ENCODE measurements at regions of chr11 and their contacts with region 1.

Region 1: DNA sequence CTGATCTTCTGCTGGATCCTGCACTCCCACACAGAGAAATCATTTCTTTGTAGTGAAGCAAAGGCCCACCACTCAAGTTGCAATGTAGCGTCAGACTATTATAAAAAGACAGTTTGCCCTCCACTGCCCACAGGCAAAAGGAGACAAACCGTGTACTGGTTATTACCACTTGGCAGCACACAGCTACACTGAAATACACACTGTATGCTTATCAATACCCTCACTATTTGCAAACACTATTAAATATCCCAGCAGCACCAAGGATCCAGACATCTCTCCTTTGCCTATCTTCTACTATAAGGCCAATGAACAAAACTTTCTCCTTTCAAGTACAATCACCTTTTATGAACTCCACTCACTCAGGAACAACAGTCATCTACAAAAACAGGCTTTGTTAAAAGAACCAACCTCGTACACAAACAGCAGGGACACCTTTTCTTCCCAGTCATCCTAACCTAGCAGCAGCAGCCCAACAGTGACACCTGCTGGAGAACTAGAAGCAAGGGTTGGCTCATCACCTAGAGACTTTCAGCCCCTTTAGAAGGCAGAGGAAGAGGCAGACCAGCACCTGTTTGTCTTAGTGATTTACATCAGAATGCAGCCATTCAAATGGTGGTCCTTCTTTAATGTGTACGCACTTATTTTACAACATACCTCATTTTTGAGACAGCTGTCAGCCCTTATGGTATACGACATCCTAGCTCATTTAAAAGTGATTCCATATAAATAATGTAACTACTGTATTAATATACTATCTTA is 56.1 kb downstream of the AMBRA1 start:
- DNase-seq: no peak
- H3K4me3 ChIP-seq: no peak overlapping the region
- CTCF ChIP-seq: peak; percentile 91

Region 2: GRCh38 chr11:46367244-46367915 is 170.3 kb before region 1 on chr11:
- CTCF ChIA-PET with region 1: interaction called, 12 read pairs
- POLR2A ChIA-PET with region 1: no interaction called
- DNase-seq: no peak
- H3K4me3 ChIP-seq: no peak overlapping the region
- CTCF ChIP-seq: peak; percentile 89

Region 3: DNA sequence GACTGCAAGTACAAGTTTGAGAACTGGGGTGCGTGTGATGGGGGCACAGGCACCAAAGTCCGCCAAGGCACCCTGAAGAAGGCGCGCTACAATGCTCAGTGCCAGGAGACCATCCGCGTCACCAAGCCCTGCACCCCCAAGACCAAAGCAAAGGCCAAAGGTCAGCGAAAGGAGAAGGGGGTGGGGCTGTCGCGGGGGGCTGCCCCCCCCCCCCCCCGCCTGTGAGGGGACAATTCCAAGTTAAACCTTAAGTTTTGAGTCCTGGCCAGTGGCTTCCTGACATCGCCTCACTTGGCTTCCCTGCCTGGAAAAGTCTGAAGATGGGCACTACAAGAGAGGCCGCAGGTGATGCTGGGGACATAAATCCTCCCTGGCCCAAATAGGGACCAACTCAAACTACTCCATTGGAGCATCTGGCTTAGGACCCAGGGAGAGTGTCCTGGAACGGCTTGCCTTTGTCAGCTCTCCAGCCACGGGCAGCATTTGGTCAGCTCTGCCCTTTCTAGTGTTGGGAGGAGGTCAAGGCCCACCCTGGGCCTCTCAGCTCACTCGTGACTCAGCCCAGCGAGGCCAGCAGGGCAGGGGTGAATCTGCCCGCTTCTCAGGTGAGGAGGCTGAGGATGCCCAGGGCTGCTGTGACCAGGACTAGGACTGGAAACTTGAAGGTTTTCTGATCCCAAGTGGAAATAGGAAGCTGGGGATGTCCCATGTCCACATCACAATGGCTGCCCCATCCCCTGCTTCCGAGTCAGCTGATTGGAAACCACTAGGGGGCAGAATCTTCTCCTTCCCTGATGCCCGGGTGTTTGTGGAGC is 154.9 kb before region 1 on chr11:
- CTCF ChIA-PET with region 1: interaction called, 103 read pairs
- POLR2A ChIA-PET with region 1: no interaction called
- DNase-seq: no peak
- H3K4me3 ChIP-seq: peak overlapping the region; percentile 64
- CTCF ChIP-seq: peak; percentile 65

Region 4: GRCh38 chr11:46489661-46490560 is 47.8 kb before region 1 on chr11:
- CTCF ChIA-PET with region 1: interaction called, 11 read pairs
- POLR2A ChIA-PET with region 1: no interaction called
- DNase-seq: no peak
- H3K4me3 ChIP-seq: no peak overlapping the region
- CTCF ChIP-seq: peak; percentile 58

Region 5: DNA sequence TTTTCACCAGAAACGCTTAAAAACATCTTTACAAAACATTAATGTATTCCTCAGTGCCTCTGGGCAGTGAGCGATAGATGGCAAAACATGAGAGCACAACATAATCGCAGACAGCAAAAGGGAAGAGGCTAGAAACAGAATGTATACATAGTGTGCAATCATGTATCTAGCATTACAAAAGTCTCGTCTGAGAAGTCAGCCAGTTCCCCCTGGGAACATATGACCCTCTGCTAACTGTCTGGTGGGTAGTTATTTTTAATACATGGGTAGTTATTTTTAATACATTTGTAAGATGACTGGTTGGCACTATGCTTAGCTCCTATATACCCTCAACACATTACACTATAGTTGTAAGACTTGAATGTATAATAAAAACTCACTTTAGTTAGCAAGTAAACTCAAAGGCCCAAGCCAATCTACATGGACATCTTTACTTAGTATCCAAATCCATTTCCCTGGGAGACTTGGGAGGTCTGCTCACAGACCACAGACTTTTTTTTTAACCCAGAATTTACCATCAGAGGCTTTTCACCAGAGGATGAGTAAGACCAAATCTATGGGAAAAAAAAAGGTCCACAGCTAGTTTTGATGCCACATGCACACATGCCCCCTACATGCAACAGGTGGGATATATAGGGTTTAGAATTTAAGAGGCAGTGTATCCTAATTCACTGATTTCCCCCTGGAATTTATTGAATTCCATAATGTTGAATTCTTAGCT is 15.6 kb before region 1 on chr11:
- CTCF ChIA-PET with region 1: interaction called, 124 read pairs
- POLR2A ChIA-PET with region 1: no interaction called
- DNase-seq: peak; percentile 16
- H3K4me3 ChIP-seq: no peak overlapping the region
- CTCF ChIP-seq: peak; percentile 41

Region 6: DNA sequence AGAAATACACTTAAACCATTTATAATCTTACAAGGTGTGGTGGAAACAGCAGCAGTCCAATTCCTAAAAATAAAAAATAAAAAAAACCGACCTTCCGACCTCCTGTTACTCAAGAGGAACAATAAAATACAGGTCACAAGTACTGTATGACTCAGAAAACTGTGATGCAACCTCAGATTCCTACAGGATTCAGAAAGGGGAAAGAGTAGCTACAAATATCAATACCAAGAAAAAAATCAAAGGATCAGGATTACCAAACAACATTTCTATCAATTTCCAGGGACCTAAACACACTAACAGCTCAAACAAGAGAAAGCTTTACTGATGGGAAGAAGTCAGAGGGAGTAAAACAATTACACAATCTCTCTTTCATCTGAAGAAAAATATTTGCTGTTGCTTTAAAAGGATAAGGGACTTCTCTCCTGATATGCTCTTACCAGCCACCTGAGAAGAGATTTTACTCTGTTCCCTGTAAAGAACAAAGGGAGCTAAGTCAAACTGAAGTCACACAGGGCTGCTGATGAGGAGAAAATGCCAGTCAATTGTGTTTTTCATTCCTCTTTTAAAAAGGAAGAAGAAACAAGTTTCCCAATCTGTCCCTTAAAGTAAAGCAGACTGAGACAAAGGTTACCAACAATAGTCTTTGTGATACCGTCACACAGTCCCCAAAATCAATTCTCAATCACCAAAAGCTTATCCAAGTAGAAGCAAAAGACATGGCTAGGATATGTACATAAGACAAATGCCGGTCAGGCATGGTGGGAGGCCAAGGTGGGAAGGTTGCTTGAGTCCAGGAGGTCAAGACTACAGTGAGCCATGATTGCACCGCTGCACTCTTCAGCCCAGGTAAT is 16.7 kb after region 1 on chr11:
- CTCF ChIA-PET with region 1: interaction called, 34 read pairs
- POLR2A ChIA-PET with region 1: no interaction called
- DNase-seq: no peak
- H3K4me3 ChIP-seq: no peak overlapping the region
- CTCF ChIP-seq: no peak

Measured in AG04449 (cell line).